Dorsolateral prefrontal cortex (tissue), 120 donors: ENCODE measurements at regions of chr5 and their contacts with region 1.

Region 1: DNA sequence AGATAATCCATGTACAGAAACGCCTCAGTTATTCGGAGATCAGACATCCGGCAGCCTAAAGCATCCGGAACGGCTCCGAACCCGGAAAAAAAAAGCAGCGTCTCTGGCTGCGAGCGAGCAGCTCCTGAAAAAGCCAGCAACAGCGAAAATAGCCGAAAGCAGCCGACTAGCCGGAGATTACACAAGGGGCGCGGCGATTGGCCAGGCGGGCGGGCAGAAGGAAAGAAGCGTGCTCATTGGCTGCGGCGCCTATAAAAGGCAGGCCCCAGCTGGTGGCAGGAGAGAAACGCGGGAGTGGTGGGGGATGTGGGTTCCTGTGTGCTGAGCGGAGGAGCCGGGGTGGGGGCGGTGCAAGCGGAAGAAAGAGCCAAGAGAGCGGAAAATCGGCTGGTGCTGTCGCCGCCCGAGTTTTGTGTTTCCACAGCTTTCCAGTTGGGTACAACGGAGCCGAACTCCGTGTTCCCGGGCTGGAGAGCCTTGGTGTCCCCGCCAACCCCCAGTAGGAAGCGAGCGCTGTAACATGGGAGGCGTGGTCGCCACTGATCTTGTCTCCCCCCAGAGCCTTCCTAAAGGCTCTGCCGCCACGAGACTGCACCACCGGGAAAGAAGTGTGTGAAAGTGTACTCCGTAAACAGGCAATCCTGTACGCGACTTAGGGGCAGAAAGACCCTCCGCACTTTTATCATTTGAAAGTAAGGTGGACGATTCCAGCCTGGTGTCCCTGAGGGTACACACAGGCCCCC is at the start of gene ARL15:
- DNase-seq: peak; percentile 98 to 100 (median 99)
- H3K4me3 ChIP-seq: peak within 1 kb of the TSS; percentile 62 to 98 (median 90)
- H3K27ac ChIP-seq: peak within 1 kb of the TSS in 55 of 59 donors; percentile 56 to 95 (median 80)
- H3K27me3 ChIP-seq: no peaks in the 10 kb centered on the region
- CTCF ChIP-seq: peak in 34 of 56 donors; percentile 6 to 51 (median 22)
- total RNA-seq, gene ARL15: 16.5 to 55.0 (median 31.4) TPM

Region 2: DNA sequence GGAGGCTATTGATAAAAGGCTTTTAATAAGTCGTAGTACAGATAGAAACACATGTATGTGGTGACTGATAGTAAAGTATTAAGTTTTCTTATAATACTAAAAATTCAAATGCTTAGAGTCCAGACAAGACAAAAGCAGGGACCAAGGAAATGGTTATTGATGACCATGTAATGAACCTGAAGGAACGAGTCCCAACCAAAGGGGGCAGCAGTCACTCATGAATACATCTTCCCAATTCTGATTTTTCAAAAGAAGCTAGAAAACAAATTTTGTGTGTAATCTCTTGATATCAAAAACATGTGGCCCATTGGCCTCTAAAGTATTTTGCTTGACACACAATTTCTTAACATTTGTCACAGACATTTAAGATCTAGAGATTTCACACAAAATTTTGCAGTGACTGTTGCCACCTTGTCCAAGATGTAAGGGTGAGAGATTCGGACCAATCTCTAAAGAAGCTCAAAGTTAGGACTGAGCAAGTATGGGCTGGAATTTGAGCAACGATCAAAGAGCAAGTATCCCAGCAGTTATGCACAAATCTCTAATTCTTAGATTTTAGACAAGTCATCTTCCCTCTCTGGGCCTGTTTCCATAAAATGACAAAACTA is 67.0 kb before region 1 on chr5:
- intact Hi-C with region 1: loop called in 1 of 2 experiments (anchors 10 kb)
- DNase-seq: peak in 2 of 10 donors; percentile 32 to 36
- H3K4me3 ChIP-seq: no peak overlapping the region
- H3K27ac ChIP-seq: no peak overlapping the region
- H3K27me3 ChIP-seq: no peaks in the 10 kb centered on the region
- CTCF ChIP-seq: peak; percentile 43 to 86 (median 74)

Region 3: GRCh38 chr5:54415896-54416601 is 105.4 kb after region 1 on chr5:
- intact Hi-C with region 1: loop called (anchors 5 to 10 kb)
- DNase-seq: no peak
- H3K4me3 ChIP-seq: no peak overlapping the region
- H3K27ac ChIP-seq: no peak overlapping the region
- H3K27me3 ChIP-seq: peaks cover 0 to 7% (median 0%) of the 10 kb centered on the region in 45 donors
- CTCF ChIP-seq: no peak

Region 4: DNA sequence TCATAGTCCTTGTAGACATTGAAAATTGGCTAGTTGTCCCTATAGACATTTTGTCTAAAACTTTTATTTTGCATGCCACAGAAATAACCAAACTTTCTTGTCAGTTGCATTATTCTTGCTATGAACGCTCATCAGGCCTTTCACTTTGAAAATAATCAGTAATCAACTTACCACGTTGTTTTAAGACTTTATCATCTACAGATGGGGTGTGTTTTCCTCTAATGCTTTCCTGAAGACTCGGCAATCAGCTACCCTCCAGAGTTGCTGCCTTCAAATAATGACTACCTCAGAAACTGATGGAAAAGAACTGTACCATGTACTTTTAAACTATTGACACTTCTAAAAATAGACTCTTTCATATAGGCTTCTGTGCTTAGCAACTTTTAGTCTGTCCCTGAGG is 111.4 kb after region 1 on chr5:
- intact Hi-C with region 1: loop called (anchors 5 to 10 kb)
- DNase-seq: no peak
- H3K4me3 ChIP-seq: no peak overlapping the region
- H3K27ac ChIP-seq: no peak overlapping the region
- H3K27me3 ChIP-seq: peaks cover 0 to 3% (median 0%) of the 10 kb centered on the region in 45 donors
- CTCF ChIP-seq: no peak